Aorta (tissue), 5 donors: ENCODE measurements at regions of chr7 and their contacts with region 1.

Region 1: DNA sequence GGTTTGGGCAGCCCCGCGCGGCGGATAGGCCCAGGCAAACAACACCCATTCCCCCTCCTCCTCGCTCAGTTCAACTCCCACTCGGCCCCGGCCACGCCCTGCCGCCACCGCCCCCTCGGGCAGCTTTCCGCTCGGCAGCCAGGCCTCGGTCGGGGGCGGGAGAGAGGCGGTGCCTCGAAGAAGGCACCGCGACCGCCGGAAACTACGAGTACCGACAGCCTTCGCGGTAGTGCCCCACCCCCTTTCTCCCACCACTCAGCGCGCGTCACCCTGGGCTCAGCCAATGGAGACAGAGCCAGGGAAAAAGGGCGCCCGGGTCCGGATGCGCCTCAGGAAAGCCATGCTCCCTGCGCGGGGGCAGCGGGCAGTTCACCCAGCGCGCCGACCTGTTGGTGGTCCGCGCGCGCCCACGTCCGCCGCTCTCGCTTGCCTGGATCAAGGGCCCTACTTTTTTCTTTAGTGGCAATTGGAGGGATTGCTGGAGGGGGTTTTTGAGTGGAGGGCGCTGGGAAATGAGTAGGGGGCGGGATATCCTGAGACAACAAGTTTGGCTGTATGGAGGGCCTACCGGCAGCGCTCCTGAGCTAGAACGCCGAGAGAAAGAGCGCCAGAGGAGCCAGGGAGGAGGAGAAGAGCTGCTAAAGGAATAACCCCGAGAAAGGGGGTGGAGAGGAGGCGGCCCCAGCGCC is 557 bp upstream of the SP4 start:
- DNase-seq: peak; percentile 100
- ATAC-seq: peak; percentile 97
- H3K4me3 ChIP-seq: peak overlapping the region; percentile 48 to 91
- H3K27ac ChIP-seq: peak overlapping the region; percentile 89 to 92
- H3K4me1 ChIP-seq: peaks cover 0 to 4% of the 10 kb centered on the region in 2 donors
- H3K27me3 ChIP-seq: no peaks in the 10 kb centered on the region

Region 2: DNA sequence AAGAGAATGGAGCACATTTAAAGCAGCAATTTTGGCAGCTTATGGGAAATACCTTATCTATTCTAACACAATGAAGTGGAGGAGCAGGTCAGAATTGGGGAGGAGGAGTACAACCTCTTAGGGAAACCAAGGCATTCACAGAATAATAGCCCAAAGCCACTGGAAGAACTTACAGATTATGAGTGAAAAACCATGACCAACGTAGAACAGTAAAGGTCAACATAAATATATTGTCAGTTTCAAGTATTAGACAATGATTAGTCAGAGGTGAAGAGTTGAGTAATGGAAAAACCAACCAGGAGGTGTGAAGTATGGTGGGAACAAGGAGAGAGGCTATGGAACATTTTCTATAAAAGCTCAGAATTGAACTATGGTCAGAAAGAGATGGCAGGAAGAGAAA is 303.7 kb before region 1 on chr7:
- intact Hi-C with region 1: no loop called
- DNase-seq: no peak
- ATAC-seq: no peak
- H3K4me3 ChIP-seq: no peak overlapping the region
- H3K27ac ChIP-seq: no peak overlapping the region
- H3K4me1 ChIP-seq: no peaks in the 10 kb centered on the region
- H3K27me3 ChIP-seq: no peaks in the 10 kb centered on the region

Region 3: DNA sequence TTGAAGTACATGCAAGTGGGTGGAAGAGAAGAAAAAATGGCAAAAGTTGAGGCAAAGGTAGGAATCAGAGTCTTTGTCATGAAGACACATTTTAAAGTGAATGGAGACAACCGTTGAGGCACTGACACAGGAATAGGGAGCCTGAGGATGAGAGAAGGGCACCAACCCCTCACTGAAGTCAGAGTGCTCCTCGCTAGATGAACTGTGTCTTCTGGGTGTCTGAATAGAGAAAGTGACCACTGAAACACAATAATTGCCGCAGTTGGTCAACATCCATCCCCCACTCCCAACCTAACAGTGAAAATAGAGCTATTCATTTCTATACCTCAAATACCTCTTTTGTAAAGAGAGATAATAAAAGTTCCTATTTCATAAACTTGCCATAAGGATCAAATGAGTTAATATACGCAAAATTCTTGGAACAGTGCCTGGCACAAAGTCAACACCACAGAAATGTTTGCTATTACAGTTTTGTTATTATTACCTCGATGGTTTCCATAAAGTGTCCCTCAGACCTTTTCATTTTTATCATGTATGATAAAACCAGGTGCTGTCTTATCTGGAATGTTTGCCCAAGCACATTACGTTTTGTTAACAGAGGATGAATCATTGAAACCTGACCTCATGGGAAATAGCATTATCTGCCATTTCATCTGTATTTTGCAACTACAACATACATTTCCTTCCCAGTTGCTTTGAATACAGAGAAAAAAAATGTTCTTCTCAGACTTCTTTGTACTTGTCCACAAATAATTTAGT is 61.3 kb before region 1 on chr7:
- intact Hi-C with region 1: no loop called
- DNase-seq: no peak
- ATAC-seq: no peak
- H3K4me3 ChIP-seq: no peak overlapping the region
- H3K27ac ChIP-seq: no peak overlapping the region
- H3K4me1 ChIP-seq: no peaks in the 10 kb centered on the region
- H3K27me3 ChIP-seq: no peaks in the 10 kb centered on the region

Region 4: GRCh38 chr7:22082886-22083703 is 655.8 kb after region 1 on chr7:
- intact Hi-C with region 1: loop called in 1 of 2 experiments (anchors 10 kb)
- DNase-seq: peak; percentile 93 to 98
- ATAC-seq: peak; percentile 100
- H3K4me3 ChIP-seq: peak overlapping the region; percentile 15 to 65
- H3K27ac ChIP-seq: peak overlapping the region in 1 of 2 donors; percentile 33
- H3K4me1 ChIP-seq: no peaks in the 10 kb centered on the region
- H3K27me3 ChIP-seq: no peaks in the 10 kb centered on the region